Activated CD4-positive, alpha-beta T cell treated with anti-CD3 and anti-CD28 coated beads, Interleukin-2, amount 10 ng/mL, durations not matched to agents 24 days and 14 days (primary cell): ENCODE measurements at regions of chr15 and their contacts with region 1.

Region 1: DNA sequence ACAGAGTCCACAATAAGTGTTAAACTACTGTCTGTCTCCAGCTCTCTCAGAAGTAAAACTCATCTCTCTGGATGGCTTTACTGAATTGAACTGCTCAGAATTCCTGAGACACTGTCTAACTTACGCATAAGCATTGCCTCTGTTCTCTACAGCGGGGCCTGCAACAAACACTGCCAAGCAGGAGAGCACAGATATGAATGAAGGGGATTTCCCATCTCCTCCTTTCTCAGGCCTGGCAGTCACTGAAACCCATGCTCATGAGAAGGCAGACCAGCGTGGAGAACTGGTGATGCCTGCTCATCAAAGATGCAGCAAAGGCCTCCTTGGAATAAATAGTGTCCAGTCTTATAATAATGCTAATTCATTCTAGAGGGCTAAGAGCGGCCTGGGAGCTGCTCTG is 10.3 kb downstream of the RASGRP1 start:
- DNase-seq: peak; percentile 75
- H3K4me3 Mint-ChIP-seq: peak overlapping the region; percentile 60
- H3K27ac Mint-ChIP-seq: peak overlapping the region; percentile 89
- H3K4me1 Mint-ChIP-seq: peaks cover 83% of the 10 kb centered on the region
- H3K27me3 Mint-ChIP-seq: no peaks in the 10 kb centered on the region

Region 2: DNA sequence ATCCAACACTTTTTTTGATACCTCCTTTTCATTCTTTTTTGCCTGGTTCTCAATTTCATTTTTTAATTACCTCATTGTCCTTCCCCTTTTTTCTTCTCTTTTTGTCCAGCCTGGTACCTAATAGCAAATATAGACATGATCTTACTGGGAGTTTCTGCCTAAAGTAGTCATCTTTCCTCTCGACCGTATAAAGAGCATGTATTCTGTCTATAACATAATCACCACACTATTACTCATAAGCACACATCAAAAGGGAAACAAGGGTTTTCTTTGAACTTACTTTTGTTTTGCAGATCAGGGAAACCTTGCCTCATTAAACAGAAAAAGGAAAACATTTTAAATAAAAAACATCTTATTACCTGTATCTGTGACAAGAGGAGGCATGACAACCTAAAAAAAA is 67.4 kb before region 1 on chr15:
- intact Hi-C with region 1: loop called (anchors 2 kb)
- DNase-seq: peak; percentile 53
- H3K4me3 Mint-ChIP-seq: peak overlapping the region; percentile 66
- H3K27ac Mint-ChIP-seq: peak overlapping the region; percentile 91
- H3K4me1 Mint-ChIP-seq: peaks cover 30% of the 10 kb centered on the region
- H3K27me3 Mint-ChIP-seq: no peaks in the 10 kb centered on the region

Region 3: GRCh38 chr15:38508647-38509046 is 45.7 kb before region 1 on chr15:
- intact Hi-C with region 1: loop called (anchors 2 kb)
- DNase-seq: no peak
- H3K4me3 Mint-ChIP-seq: no peak overlapping the region
- H3K27ac Mint-ChIP-seq: peak overlapping the region; percentile 78
- H3K4me1 Mint-ChIP-seq: peaks cover 42% of the 10 kb centered on the region
- H3K27me3 Mint-ChIP-seq: no peaks in the 10 kb centered on the region

Region 4: GRCh38 chr15:38878926-38879325 is 324.6 kb after region 1 on chr15:
- intact Hi-C with region 1: no loop called
- DNase-seq: no peak
- H3K4me3 Mint-ChIP-seq: no peak overlapping the region
- H3K27ac Mint-ChIP-seq: no peak overlapping the region
- H3K4me1 Mint-ChIP-seq: peaks cover 1% of the 10 kb centered on the region
- H3K27me3 Mint-ChIP-seq: peaks cover 5% of the 10 kb centered on the region